Heart left ventricle (tissue), 16 donors: ENCODE measurements at regions of chr11 and their contacts with region 1.

Region 1: GRCh38 chr11:19553683-19554333 is 158.8 kb upstream of the NAV2 start:
- DNase-seq: peak; percentile 77 to 86 (median 80)
- ATAC-seq: peak; percentile 67 to 85 (median 78)
- H3K4me3 ChIP-seq: no peak overlapping the region
- H3K27ac ChIP-seq: no peak overlapping the region
- H3K4me1 ChIP-seq: peaks cover 0 to 9% (median 0%) of the 10 kb centered on the region in 12 donors
- H3K27me3 ChIP-seq: peaks cover 0 to 6% (median 0%) of the 10 kb centered on the region in 9 donors
- CTCF ChIP-seq: peak; percentile 80 to 94 (median 87)
- POLR2A ChIP-seq: no peak

Region 2: GRCh38 chr11:19071255-19071654 is 482.6 kb before region 1 on chr11:
- intact Hi-C with region 1: loop called (anchors 1 to 5 kb)
- DNase-seq: peak; percentile 43 to 73 (median 61)
- ATAC-seq: peak; percentile 85 to 96 (median 92)
- H3K4me3 ChIP-seq: peak overlapping the region in 4 of 12 donors; percentile 11 to 25 (median 16)
- H3K27ac ChIP-seq: no peak overlapping the region
- H3K4me1 ChIP-seq: peaks cover 0 to 4% (median 0%) of the 10 kb centered on the region in 12 donors
- H3K27me3 ChIP-seq: peaks cover 0 to 23% (median 0%) of the 10 kb centered on the region in 9 donors
- CTCF ChIP-seq: peak; percentile 81 to 96 (median 90)
- POLR2A ChIP-seq: no peak

Region 3: GRCh38 chr11:19160847-19161246 is 393.0 kb before region 1 on chr11:
- intact Hi-C with region 1: loop called in 7 of 10 experiments (anchors 2 to 10 kb)
- DNase-seq: no peak
- ATAC-seq: peak in 1 of 4 donors; percentile 41
- H3K4me3 ChIP-seq: no peak overlapping the region
- H3K27ac ChIP-seq: no peak overlapping the region
- H3K4me1 ChIP-seq: no peaks in the 10 kb centered on the region
- H3K27me3 ChIP-seq: no peaks in the 10 kb centered on the region
- CTCF ChIP-seq: peak in 6 of 12 donors; percentile 19 to 42 (median 24)
- POLR2A ChIP-seq: no peak

Region 4: GRCh38 chr11:19268951-19269350 is 284.9 kb before region 1 on chr11:
- intact Hi-C with region 1: loop called in 3 of 10 experiments (anchors 5 kb)
- DNase-seq: no peak
- ATAC-seq: no peak
- H3K4me3 ChIP-seq: no peak overlapping the region
- H3K27ac ChIP-seq: no peak overlapping the region
- H3K4me1 ChIP-seq: peaks cover 0 to 6% (median 0%) of the 10 kb centered on the region in 12 donors
- H3K27me3 ChIP-seq: peaks cover 0 to 11% (median 0%) of the 10 kb centered on the region in 9 donors
- CTCF ChIP-seq: no peak
- POLR2A ChIP-seq: no peak

Region 5: GRCh38 chr11:19326499-19326898 is 227.3 kb before region 1 on chr11:
- intact Hi-C with region 1: loop called in 4 of 10 experiments (anchors 5 kb)
- DNase-seq: no peak
- ATAC-seq: no peak
- H3K4me3 ChIP-seq: no peak overlapping the region
- H3K27ac ChIP-seq: no peak overlapping the region
- H3K4me1 ChIP-seq: peaks cover 0 to under 1% (median 0%) of the 10 kb centered on the region in 12 donors
- H3K27me3 ChIP-seq: peaks cover 0 to 5% (median 0%) of the 10 kb centered on the region in 9 donors
- CTCF ChIP-seq: peak in 7 of 12 donors; percentile 9 to 47 (median 25)
- POLR2A ChIP-seq: no peak

Region 6: DNA sequence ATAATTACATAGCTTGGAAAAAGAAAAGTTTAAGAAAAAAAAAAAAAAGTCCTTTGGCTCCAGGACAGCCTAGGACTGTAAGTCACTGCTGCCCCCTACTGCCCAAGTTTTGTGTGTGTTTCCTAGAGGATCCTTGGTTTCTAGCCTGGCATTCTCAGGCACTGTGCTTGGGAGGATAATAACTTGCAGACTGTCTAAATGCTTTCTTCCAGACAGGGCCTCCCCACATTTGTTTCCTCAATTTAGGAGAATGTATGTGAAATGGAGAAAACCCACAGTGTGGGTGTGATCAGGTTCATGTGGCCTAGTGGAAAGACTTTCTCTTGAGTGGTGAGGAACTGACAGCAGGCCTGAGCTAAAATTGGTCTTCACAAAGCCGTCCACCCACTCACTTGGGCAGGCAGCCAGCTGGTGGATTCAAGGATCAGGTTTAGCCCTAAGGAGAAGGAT is 349.8 kb after region 1 on chr11:
- intact Hi-C with region 1: loop called in 4 of 10 experiments (anchors 2 to 5 kb)
- DNase-seq: peak in 4 of 5 donors; percentile 46 to 75 (median 68)
- ATAC-seq: peak; percentile 44 to 73 (median 63)
- H3K4me3 ChIP-seq: no peak overlapping the region
- H3K27ac ChIP-seq: peak overlapping the region in 1 of 12 donors; percentile 10
- H3K4me1 ChIP-seq: peaks cover 0 to 26% (median 5%) of the 10 kb centered on the region in 12 donors
- H3K27me3 ChIP-seq: no peaks in the 10 kb centered on the region
- CTCF ChIP-seq: peak; percentile 68 to 85 (median 76)
- POLR2A ChIP-seq: no peak